ENCODE measurements at regions of chrX and their contacts with region 1.

Region 1: GRCh38 chrX:12567857-12568256 is 223.4 kb upstream of the PRPS2 start:
- DNase-seq: no peak
- H3K4me3 ChIP-seq: no peak overlapping the region
- H3K27ac ChIP-seq: no peak overlapping the region
- H3K4me1 ChIP-seq: peaks cover 5% of the 10 kb centered on the region
- H3K27me3 ChIP-seq: no peaks in the 10 kb centered on the region
- CTCF ChIP-seq: peak; percentile 77 to 89

Region 2: GRCh38 chrX:12058087-12058486 is 509.8 kb before region 1 on chrX:
- CTCF ChIA-PET with region 1: no interaction called
- dilution Hi-C with region 1: no loop called
- in situ Hi-C with region 1: no loop called
- intact Hi-C with region 1: loop called (anchors 5 kb)
- DNase-seq: peak; percentile 53
- H3K4me3 ChIP-seq: no peak overlapping the region
- H3K27ac ChIP-seq: peak overlapping the region; percentile 49
- H3K4me1 ChIP-seq: peaks cover 16% of the 10 kb centered on the region
- H3K27me3 ChIP-seq: no peaks in the 10 kb centered on the region
- CTCF ChIP-seq: no peak

Region 3: GRCh38 chrX:12138361-12139313 is 429.2 kb before region 1 on chrX and contains the start of gene FRMPD4:
- CTCF ChIA-PET with region 1: no interaction called
- dilution Hi-C with region 1: no loop called
- in situ Hi-C with region 1: no loop called
- intact Hi-C with region 1: loop called (anchors 2 kb)
- DNase-seq: peak; percentile 43
- H3K4me3 ChIP-seq: peak within 1 kb of the TSS; percentile 46 to 56 (median 46)
- H3K27ac ChIP-seq: no peak within 1 kb of the TSS
- H3K4me1 ChIP-seq: peaks cover 8% of the 10 kb centered on the region
- H3K27me3 ChIP-seq: no peaks in the 10 kb centered on the region
- CTCF ChIP-seq: peak in 1 of 2 donors; percentile 42
- total RNA-seq, gene FRMPD4: 0.17 to 0.24 TPM

Region 4: GRCh38 chrX:12383196-12383595 is 184.7 kb before region 1 on chrX:
- CTCF ChIA-PET with region 1: no interaction called
- dilution Hi-C with region 1: no loop called
- in situ Hi-C with region 1: no loop called
- intact Hi-C with region 1: loop called (anchors 10 kb)
- DNase-seq: no peak
- H3K4me3 ChIP-seq: no peak overlapping the region
- H3K27ac ChIP-seq: no peak overlapping the region
- H3K4me1 ChIP-seq: no peaks in the 10 kb centered on the region
- H3K27me3 ChIP-seq: no peaks in the 10 kb centered on the region
- CTCF ChIP-seq: peak; percentile 13 to 51

Region 5: DNA sequence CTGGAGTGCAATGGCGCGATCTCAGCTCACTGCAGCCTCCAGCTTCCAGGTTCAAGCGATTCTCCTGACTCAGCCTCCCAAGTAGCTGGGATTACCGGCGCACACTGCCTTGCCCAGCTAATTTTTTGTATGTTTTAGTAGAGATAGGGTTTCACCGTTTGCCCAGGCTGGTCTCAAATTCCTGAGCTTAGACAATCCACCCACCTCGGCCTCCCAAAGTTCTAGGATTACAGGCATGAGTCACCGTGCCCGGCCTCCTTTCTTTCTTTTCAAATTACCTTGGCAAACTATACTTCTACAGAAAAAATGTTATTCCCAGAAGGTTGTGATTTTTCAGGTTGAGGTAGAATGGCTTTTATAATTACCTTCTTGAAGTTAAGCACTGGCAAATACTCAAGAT is 98.6 kb before region 1 on chrX:
- CTCF ChIA-PET with region 1: no interaction called
- dilution Hi-C with region 1: no loop called
- in situ Hi-C with region 1: no loop called
- intact Hi-C with region 1: no loop called
- DNase-seq: peak; percentile 66
- H3K4me3 ChIP-seq: no peak overlapping the region
- H3K27ac ChIP-seq: no peak overlapping the region
- H3K4me1 ChIP-seq: peaks cover 7% of the 10 kb centered on the region
- H3K27me3 ChIP-seq: no peaks in the 10 kb centered on the region
- CTCF ChIP-seq: no peak

Region 6: GRCh38 chrX:12497832-12498591 is 69.8 kb before region 1 on chrX:
- CTCF ChIA-PET with region 1: no interaction called
- dilution Hi-C with region 1: no loop called
- in situ Hi-C with region 1: no loop called
- intact Hi-C with region 1: no loop called
- DNase-seq: no peak
- H3K4me3 ChIP-seq: no peak overlapping the region
- H3K27ac ChIP-seq: no peak overlapping the region
- H3K4me1 ChIP-seq: no peaks in the 10 kb centered on the region
- H3K27me3 ChIP-seq: no peaks in the 10 kb centered on the region
- CTCF ChIP-seq: peak; percentile 44 to 71

Region 7: DNA sequence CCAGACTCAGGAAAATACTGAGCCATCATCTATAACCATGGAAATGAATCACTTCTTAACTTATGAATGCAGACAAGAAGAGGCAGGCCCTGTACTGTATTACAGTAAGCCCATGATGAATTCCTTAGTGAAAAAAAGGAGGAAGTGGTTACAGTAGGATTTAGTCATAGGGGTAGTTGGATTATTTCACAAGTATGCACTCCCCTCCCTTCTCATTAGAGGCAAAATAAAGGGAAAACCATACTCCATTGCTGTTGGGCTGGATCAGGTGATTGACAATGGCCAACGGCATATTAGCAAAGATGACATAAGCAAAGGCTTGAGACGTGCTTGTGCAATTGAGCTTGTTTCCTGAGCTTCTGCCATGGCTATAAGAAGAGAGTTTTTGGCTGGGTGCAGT is 42.2 kb after region 1 on chrX:
- CTCF ChIA-PET with region 1: no interaction called
- dilution Hi-C with region 1: no loop called
- in situ Hi-C with region 1: no loop called
- intact Hi-C with region 1: loop called (anchors 5 kb)
- DNase-seq: peak; percentile 98
- H3K4me3 ChIP-seq: no peak overlapping the region
- H3K27ac ChIP-seq: peak overlapping the region; percentile 86
- H3K4me1 ChIP-seq: peaks cover 28% of the 10 kb centered on the region
- H3K27me3 ChIP-seq: no peaks in the 10 kb centered on the region
- CTCF ChIP-seq: no peak

Region 8: GRCh38 chrX:13550346-13550745 is 982.5 kb after region 1 on chrX:
- CTCF ChIA-PET with region 1: no interaction called
- dilution Hi-C with region 1: no loop called
- in situ Hi-C with region 1: no loop called
- intact Hi-C with region 1: no loop called
- DNase-seq: no peak
- H3K4me3 ChIP-seq: no peak overlapping the region
- H3K27ac ChIP-seq: no peak overlapping the region
- H3K4me1 ChIP-seq: no peaks in the 10 kb centered on the region
- H3K27me3 ChIP-seq: no peaks in the 10 kb centered on the region
- CTCF ChIP-seq: no peak